CD8-positive, alpha-beta T cell (primary cell): ENCODE measurements at regions of chr2 and their contacts with region 1.

Region 1: DNA sequence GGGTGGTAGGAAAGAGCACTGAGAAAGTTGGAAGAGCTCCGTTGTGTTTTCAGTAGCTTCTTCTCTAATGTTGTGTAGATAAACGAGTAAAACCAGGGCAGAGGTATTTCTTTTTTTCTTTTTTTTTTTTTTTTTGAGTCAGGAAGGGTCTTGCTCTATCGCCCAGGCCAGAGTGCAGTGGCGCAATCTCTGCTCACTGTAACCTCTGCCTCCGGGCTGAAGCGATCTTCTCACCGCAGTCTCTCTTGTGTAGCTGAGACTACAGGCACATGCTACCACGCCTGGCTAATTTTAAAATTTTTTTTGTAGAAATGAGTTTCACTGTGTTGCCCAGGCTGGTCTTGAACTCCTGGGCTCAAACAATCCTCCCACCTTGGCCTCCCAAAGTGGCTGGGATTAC is 6.6 kb downstream of the GRHL1 start:
- DNase-seq: no peak
- ATAC-seq: no peak
- H3K4me3 ChIP-seq: no peak overlapping the region
- H3K4me3 Mint-ChIP-seq: no peak overlapping the region
- H3K27ac ChIP-seq: no peak overlapping the region
- H3K27ac Mint-ChIP-seq: no peak overlapping the region
- H3K4me1 ChIP-seq: no peaks in the 10 kb centered on the region
- H3K4me1 Mint-ChIP-seq: no peaks in the 10 kb centered on the region
- H3K27me3 ChIP-seq: peaks cover 0 to 3% of the 10 kb centered on the region in 2 experiments
- H3K27me3 Mint-ChIP-seq: peaks cover 23% of the 10 kb centered on the region
- CTCF ChIP-seq: no peak

Region 2: DNA sequence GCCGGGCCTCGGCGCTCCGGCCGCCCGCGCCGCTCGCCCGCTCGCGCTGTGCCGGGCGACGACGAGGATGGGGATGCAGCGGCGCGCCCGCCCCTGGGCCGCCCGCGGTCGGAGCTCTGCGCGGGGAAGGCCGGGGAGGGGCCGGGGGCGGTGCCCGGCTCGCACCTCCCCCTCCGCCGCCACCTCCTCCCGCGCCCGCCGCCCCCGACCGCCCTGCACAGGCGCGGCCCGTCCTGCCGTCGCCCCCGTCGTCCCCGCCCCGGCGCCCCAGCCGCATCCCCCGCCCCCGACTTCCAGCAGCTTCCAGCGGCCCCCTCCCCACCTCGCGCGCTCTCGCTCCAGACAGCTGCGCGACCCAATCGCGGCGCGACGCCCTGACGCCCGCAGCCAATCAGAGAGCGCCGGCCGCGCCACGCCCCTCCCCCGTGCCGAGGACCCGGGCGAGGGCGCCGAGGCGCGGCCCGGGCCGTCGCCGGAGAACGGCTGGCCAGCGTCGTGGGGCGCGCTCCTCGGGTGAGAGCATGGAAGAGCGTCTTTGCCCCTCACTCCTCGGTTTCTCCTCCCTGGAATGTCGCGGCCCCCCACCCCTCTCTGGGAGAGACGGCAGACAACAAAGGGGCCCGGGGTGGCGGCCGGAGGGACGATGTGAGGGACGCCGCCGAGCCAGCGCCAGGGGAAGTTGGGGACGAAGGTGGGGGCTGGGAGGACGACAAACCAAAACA is 954.3 kb before region 1 on chr2 and contains the start of gene MBOAT2:
- CTCF ChIA-PET with region 1: no interaction called
- POLR2A ChIA-PET with region 1: no interaction called
- intact Hi-C with region 1: loop called in 1 of 2 experiments (anchors 5 kb)
- DNase-seq: peak; percentile 39 to 88 (median 71)
- ATAC-seq: peak; percentile 88
- H3K4me3 ChIP-seq: peak within 1 kb of the TSS; percentile 53 to 69
- H3K4me3 Mint-ChIP-seq: peak within 1 kb of the TSS; percentile 83
- H3K27ac ChIP-seq: peak within 1 kb of the TSS in 1 of 2 experiments; percentile 18
- H3K27ac Mint-ChIP-seq: peak within 1 kb of the TSS; percentile 60
- H3K4me1 ChIP-seq: peaks cover 9% of the 10 kb centered on the region
- H3K4me1 Mint-ChIP-seq: peaks cover 16% of the 10 kb centered on the region
- H3K27me3 ChIP-seq: no peaks in the 10 kb centered on the region
- H3K27me3 Mint-ChIP-seq: peaks cover 5% of the 10 kb centered on the region
- CTCF ChIP-seq: no peak
- total RNA-seq, gene MBOAT2: 0.54 to 1.1 TPM

Region 3: DNA sequence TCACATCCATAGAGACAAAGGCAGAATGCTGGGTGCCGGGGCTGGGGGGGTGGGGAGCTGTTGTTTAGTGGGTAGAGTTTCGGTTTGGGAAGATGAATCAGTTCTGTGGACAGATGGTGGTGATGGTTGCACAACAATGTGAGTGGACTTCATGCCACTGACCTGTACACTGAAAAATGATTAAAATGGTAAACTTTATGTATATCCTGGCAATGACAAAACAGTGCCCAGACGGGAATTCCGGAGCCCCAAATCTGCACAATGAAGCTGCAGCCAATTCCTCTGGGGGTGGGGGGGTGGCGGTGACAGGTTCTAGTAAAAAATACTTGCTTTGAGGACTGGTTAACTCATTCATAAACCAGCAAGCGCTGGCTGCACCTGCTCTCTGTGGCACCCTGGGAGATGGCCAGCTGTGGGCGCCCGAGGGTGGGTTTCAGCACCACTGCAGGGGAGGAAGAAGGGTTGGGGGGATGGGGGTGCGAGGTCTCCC is 262.9 kb after region 1 on chr2:
- CTCF ChIA-PET with region 1: no interaction called
- POLR2A ChIA-PET with region 1: no interaction called
- intact Hi-C with region 1: no loop called
- DNase-seq: no peak
- ATAC-seq: no peak
- H3K4me3 ChIP-seq: no peak overlapping the region
- H3K4me3 Mint-ChIP-seq: no peak overlapping the region
- H3K27ac ChIP-seq: no peak overlapping the region
- H3K27ac Mint-ChIP-seq: no peak overlapping the region
- H3K4me1 ChIP-seq: no peaks in the 10 kb centered on the region
- H3K4me1 Mint-ChIP-seq: no peaks in the 10 kb centered on the region
- H3K27me3 ChIP-seq: no peaks in the 10 kb centered on the region
- H3K27me3 Mint-ChIP-seq: no peaks in the 10 kb centered on the region
- CTCF ChIP-seq: no peak